HepG2 (cell line): ENCODE measurements at regions of chr6 and their contacts with region 1.

Region 1: DNA sequence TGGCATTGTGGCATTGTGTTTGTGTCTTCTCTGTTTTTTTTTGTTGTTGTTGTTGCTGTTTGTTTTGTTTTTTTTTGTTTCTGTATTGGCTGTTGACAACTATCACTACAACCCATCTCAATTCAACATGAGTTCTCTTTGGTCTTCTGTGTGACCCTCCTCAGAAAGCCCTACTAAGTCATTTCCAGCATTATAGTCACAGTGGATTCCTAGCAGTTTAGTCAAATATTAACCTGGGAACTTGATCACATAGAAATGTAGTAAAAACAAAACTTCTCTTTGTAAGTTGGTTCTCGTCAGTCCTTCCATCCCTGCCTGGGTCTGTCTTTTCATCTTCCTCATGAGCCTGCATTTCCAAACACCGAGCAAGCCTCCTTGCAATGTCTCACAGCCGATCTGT is 16.8 kb downstream of the SLC17A2 start:
- DNase-seq: peak; percentile 83
- ATAC-seq: peak; percentile 86
- H3K4me3 ChIP-seq: no peak overlapping the region; a peak in 1 of 6 replicates
- H3K27ac ChIP-seq: peak overlapping the region; percentile 62
- H3K4me1 ChIP-seq: peaks cover 58% of the 10 kb centered on the region
- H3K27me3 ChIP-seq: no peaks in the 10 kb centered on the region
- CTCF ChIP-seq: no peak
- EP300 ChIP-seq: peak in 1 of 2 experiments; percentile 78; a peak in 1 of 4 replicates
- POLR2A ChIP-seq: peak in 1 of 2 experiments; percentile 24; a peak in 1 of 4 replicates
- RAD21 ChIP-seq: no peak

Region 2: GRCh38 chr6:25637960-25638434 is 275.7 kb before region 1 on chr6:
- CTCF ChIA-PET with region 1: no interaction called
- POLR2A ChIA-PET with region 1: interaction called, 5 read pairs
- in situ Hi-C with region 1: no loop called
- intact Hi-C with region 1: loop called (anchors 5 kb)
- DNase-seq: peak; percentile 38
- ATAC-seq: peak; percentile 6
- H3K4me3 ChIP-seq: no peak overlapping the region
- H3K27ac ChIP-seq: peak overlapping the region; percentile 73
- H3K4me1 ChIP-seq: peaks cover 89% of the 10 kb centered on the region
- H3K27me3 ChIP-seq: no peaks in the 10 kb centered on the region
- CTCF ChIP-seq: peak; percentile 57
- EP300 ChIP-seq: no peak
- POLR2A ChIP-seq: no peak
- RAD21 ChIP-seq: no peak

Region 3: GRCh38 chr6:25899123-25899522 is 14.6 kb before region 1 on chr6:
- CTCF ChIA-PET with region 1: no interaction called
- POLR2A ChIA-PET with region 1: interaction called, 111 read pairs
- in situ Hi-C with region 1: no loop called
- intact Hi-C with region 1: no loop called
- DNase-seq: peak; percentile 43
- ATAC-seq: peak; percentile 45
- H3K4me3 ChIP-seq: no peak overlapping the region; a peak in 1 of 6 replicates
- H3K27ac ChIP-seq: peak overlapping the region; percentile 61
- H3K4me1 ChIP-seq: peaks cover 54% of the 10 kb centered on the region
- H3K27me3 ChIP-seq: no peaks in the 10 kb centered on the region
- CTCF ChIP-seq: no peak
- EP300 ChIP-seq: no peak
- POLR2A ChIP-seq: no peak
- RAD21 ChIP-seq: no peak

Region 4: GRCh38 chr6:25927756-25928216 is 14.0 kb after region 1 on chr6:
- CTCF ChIA-PET with region 1: no interaction called
- POLR2A ChIA-PET with region 1: interaction called, 47 read pairs
- in situ Hi-C with region 1: no loop called
- intact Hi-C with region 1: loop called (anchors 1 kb)
- DNase-seq: no peak
- ATAC-seq: no peak
- H3K4me3 ChIP-seq: peak overlapping the region in 2 of 3 experiments; percentile 43 to 45; a peak in 3 of 6 replicates
- H3K27ac ChIP-seq: peak overlapping the region; percentile 81
- H3K4me1 ChIP-seq: peaks cover 66% of the 10 kb centered on the region
- H3K27me3 ChIP-seq: no peaks in the 10 kb centered on the region
- CTCF ChIP-seq: no peak
- EP300 ChIP-seq: no peak
- POLR2A ChIP-seq: no peak
- RAD21 ChIP-seq: no peak